ENCODE measurements at regions of chr11 and their contacts with region 1.

Region 1: GRCh38 chr11:9672288-9672916 is 8.5 kb downstream of the SWAP70 start:
- DNase-seq: no peak
- ATAC-seq: no peak
- H3K4me3 Mint-ChIP-seq: no peak overlapping the region
- H3K27ac Mint-ChIP-seq: peak overlapping the region; percentile 94
- H3K4me1 Mint-ChIP-seq: peaks cover 71% of the 10 kb centered on the region
- H3K27me3 Mint-ChIP-seq: no peaks in the 10 kb centered on the region
- CTCF ChIP-seq: no peak

Region 2: GRCh38 chr11:9688716-9689511 is 16.5 kb after region 1 on chr11:
- CTCF ChIA-PET with region 1: interaction called, 7 read pairs
- POLR2A ChIA-PET with region 1: interaction called, 133 read pairs
- intact Hi-C with region 1: loop called (anchors 1 kb)
- DNase-seq: no peak
- ATAC-seq: peak; percentile 80
- H3K4me3 Mint-ChIP-seq: no peak overlapping the region
- H3K27ac Mint-ChIP-seq: no peak overlapping the region
- H3K4me1 Mint-ChIP-seq: peaks cover 52% of the 10 kb centered on the region
- H3K27me3 Mint-ChIP-seq: no peaks in the 10 kb centered on the region
- CTCF ChIP-seq: no peak